K562 (cell line): ENCODE measurements at regions of chrX and their contacts with region 1.

Region 1: DNA sequence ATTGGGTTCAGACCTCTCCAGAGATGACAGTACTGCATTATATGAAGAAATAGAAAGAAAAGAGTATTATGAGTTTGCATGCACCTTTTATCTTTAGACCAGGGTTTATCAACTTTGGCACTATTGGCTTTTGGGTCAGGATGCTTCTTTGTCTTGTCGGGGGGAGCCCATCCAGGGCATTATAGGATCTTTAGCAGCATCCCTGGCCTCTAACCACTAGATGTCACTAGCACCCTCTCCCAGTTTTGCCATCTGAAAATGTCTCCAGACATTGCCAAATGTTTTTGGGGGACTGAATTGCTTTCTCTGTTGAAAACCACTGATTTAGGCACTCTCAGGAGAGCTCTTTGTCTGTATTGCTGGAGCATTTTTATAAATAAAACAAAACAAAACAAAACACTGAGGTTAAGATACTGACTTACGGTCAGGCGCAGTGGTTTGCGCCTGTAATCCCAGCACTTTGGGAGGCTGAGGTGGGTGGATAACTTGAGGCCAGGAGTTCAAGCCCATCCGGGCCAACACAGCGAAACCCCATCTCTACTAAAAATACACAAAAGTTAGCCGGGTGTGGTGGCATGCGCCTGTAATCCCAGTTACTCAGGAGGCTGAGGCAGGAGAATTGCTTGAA is 23.6 kb downstream of the CA5B start:
- DNase-seq: peak; percentile 39 to 53 (median 42)
- ATAC-seq: peak; percentile 88
- H3K4me3 ChIP-seq: no peak overlapping the region
- H3K27ac ChIP-seq: no peak overlapping the region
- H3K4me1 ChIP-seq: no peaks in the 10 kb centered on the region
- H3K27me3 ChIP-seq: no peaks in the 10 kb centered on the region
- CTCF ChIP-seq: peak; percentile 61 to 65 (median 64)
- EP300 ChIP-seq: no peak
- POLR2A ChIP-seq: no peak
- RAD21 ChIP-seq: peak; percentile 50 to 64

Region 2: DNA sequence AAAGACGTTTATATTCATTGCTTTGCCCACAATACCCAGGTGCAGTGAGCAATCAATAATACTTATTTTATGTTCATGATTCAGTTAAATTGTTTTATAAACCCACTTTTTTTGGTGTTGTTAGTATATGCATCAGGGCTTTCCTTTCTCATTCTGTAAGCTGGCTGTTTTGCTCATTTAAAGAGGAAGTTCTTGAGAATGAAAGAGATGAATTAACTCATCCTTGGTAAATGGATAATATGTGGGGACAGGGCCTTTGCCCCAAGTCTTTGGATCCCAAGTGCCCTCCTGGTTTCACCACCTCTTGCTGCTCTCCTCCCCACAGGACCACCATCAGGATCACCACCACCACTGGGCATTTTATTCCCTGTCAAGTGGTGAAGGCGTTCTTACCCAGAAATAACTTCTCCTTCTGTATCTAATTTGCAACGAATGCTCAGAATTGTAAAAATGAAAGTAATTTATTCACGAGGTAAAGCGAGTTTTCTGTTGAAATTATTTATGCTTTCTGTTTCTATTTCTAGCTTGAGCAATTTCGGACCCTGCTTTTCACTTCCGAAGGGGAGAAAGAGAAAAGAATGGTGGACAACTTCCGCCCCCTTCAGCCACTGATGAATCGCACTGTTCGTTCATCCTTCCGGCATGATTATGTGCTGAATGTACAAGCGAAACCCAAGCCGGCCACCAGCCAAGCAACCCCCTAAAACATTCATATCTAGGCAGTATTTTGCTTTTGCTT is 20.5 kb after region 1 on chrX:
- CTCF ChIA-PET with region 1: no interaction called
- POLR2A ChIA-PET with region 1: no interaction called
- in situ Hi-C with region 1: no loop called
- intact Hi-C with region 1: no loop called
- DNase-seq: no peak
- ATAC-seq: no peak
- H3K4me3 ChIP-seq: no peak overlapping the region
- H3K27ac ChIP-seq: no peak overlapping the region
- H3K4me1 ChIP-seq: no peaks in the 10 kb centered on the region
- H3K27me3 ChIP-seq: no peaks in the 10 kb centered on the region
- CTCF ChIP-seq: no peak
- EP300 ChIP-seq: no peak
- POLR2A ChIP-seq: no peak
- RAD21 ChIP-seq: no peak

Region 3: GRCh38 chrX:15873566-15873965 is 111.9 kb after region 1 on chrX:
- CTCF ChIA-PET with region 1: no interaction called
- POLR2A ChIA-PET with region 1: no interaction called
- in situ Hi-C with region 1: no loop called
- intact Hi-C with region 1: no loop called
- DNase-seq: no peak
- ATAC-seq: no peak
- H3K4me3 ChIP-seq: no peak overlapping the region
- H3K27ac ChIP-seq: no peak overlapping the region
- H3K4me1 ChIP-seq: no peaks in the 10 kb centered on the region
- H3K27me3 ChIP-seq: no peaks in the 10 kb centered on the region; a peak in 1 of 5 replicates
- CTCF ChIP-seq: no peak
- EP300 ChIP-seq: no peak
- POLR2A ChIP-seq: no peak
- RAD21 ChIP-seq: no peak

Region 4: DNA sequence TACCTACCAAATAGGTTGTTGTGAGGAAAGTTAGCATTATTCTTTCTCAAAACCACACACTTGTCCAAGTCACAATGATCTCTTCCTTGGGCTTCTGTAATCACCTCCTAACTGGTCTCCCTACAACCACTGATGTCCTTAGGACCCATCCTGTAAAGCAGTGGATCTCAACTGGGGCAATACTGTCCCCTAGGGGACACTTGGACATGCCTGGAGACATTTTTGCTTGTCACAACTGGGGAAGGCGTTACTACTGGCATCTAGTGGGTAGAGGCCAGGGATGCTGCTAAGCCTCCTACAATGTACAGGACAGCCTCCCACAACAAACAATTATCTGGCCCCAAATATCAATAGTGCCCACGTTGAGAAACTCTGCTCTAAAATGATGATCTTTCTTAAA is 211.6 kb after region 1 on chrX:
- CTCF ChIA-PET with region 1: no interaction called
- POLR2A ChIA-PET with region 1: no interaction called
- in situ Hi-C with region 1: no loop called
- intact Hi-C with region 1: loop called (anchors 2 kb)
- DNase-seq: peak; percentile 4 to 61 (median 28)
- ATAC-seq: peak; percentile 94
- H3K4me3 ChIP-seq: no peak overlapping the region
- H3K27ac ChIP-seq: no peak overlapping the region
- H3K4me1 ChIP-seq: peaks cover 0 to 19% of the 10 kb centered on the region in 2 experiments; a peak in 2 of 5 replicates
- H3K27me3 ChIP-seq: no peaks in the 10 kb centered on the region
- CTCF ChIP-seq: peak; percentile 69 to 94 (median 92)
- EP300 ChIP-seq: no peak
- POLR2A ChIP-seq: no peak
- RAD21 ChIP-seq: peak; percentile 93

Region 5: GRCh38 chrX:16002185-16002584 is 240.5 kb after region 1 on chrX:
- CTCF ChIA-PET with region 1: no interaction called
- POLR2A ChIA-PET with region 1: no interaction called
- in situ Hi-C with region 1: no loop called
- intact Hi-C with region 1: no loop called
- DNase-seq: no peak
- ATAC-seq: no peak
- H3K4me3 ChIP-seq: no peak overlapping the region
- H3K27ac ChIP-seq: no peak overlapping the region
- H3K4me1 ChIP-seq: no peaks in the 10 kb centered on the region
- H3K27me3 ChIP-seq: no peaks in the 10 kb centered on the region
- CTCF ChIP-seq: no peak
- EP300 ChIP-seq: no peak
- POLR2A ChIP-seq: no peak
- RAD21 ChIP-seq: no peak

Region 6: DNA sequence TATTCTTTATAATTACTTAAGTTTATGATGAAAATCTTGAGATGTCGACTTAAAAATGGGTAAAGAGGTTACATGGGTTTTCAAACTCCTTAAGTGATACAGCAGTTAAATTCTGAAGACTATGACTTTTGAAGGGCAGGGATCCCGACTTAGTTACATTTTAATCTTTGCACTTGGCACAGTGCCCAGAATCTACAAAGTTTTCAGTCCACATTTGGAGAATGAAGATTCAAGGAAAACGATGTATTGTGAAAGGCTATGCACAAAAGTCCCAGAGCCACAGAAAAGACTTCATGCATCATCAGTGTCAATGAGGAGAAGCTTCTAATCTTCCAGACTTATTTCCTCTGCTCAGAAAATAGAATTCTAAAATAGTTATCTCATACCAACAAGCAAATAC is 325.4 kb after region 1 on chrX:
- CTCF ChIA-PET with region 1: no interaction called
- POLR2A ChIA-PET with region 1: no interaction called
- in situ Hi-C with region 1: no loop called
- intact Hi-C with region 1: no loop called
- DNase-seq: no peak
- ATAC-seq: no peak
- H3K4me3 ChIP-seq: no peak overlapping the region
- H3K27ac ChIP-seq: no peak overlapping the region
- H3K4me1 ChIP-seq: no peaks in the 10 kb centered on the region
- H3K27me3 ChIP-seq: no peaks in the 10 kb centered on the region
- CTCF ChIP-seq: no peak
- EP300 ChIP-seq: no peak
- POLR2A ChIP-seq: no peak
- RAD21 ChIP-seq: no peak

Region 7: DNA sequence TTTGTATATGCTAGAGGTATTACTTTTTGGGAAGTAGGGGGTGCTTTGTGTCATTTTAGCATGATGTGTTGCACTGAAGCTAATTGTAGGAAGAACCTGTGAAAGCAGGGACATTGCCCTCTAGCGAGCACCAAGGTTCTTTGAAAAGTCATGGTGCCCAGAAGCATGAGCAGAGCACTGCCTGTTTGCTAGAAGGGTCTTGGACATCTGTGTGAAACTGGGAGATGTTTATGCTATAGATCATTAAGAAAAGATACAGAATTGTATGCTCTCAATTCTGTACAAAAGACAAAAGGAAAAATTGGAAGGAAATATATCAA is 376.4 kb after region 1 on chrX:
- CTCF ChIA-PET with region 1: no interaction called
- POLR2A ChIA-PET with region 1: no interaction called
- in situ Hi-C with region 1: no loop called
- intact Hi-C with region 1: loop called (anchors 5 kb)
- DNase-seq: peak in 2 of 4 experiments; percentile 8 to 20
- ATAC-seq: peak; percentile 58; the same call in 2 of the 3 replicates
- H3K4me3 ChIP-seq: no peak overlapping the region
- H3K27ac ChIP-seq: no peak overlapping the region
- H3K4me1 ChIP-seq: no peaks in the 10 kb centered on the region
- H3K27me3 ChIP-seq: no peaks in the 10 kb centered on the region
- CTCF ChIP-seq: peak; percentile 40 to 51 (median 40); a peak in 4 of 6 replicates
- EP300 ChIP-seq: no peak
- POLR2A ChIP-seq: no peak
- RAD21 ChIP-seq: peak; percentile 36 to 59; a peak in 3 of 4 replicates

Region 8: DNA sequence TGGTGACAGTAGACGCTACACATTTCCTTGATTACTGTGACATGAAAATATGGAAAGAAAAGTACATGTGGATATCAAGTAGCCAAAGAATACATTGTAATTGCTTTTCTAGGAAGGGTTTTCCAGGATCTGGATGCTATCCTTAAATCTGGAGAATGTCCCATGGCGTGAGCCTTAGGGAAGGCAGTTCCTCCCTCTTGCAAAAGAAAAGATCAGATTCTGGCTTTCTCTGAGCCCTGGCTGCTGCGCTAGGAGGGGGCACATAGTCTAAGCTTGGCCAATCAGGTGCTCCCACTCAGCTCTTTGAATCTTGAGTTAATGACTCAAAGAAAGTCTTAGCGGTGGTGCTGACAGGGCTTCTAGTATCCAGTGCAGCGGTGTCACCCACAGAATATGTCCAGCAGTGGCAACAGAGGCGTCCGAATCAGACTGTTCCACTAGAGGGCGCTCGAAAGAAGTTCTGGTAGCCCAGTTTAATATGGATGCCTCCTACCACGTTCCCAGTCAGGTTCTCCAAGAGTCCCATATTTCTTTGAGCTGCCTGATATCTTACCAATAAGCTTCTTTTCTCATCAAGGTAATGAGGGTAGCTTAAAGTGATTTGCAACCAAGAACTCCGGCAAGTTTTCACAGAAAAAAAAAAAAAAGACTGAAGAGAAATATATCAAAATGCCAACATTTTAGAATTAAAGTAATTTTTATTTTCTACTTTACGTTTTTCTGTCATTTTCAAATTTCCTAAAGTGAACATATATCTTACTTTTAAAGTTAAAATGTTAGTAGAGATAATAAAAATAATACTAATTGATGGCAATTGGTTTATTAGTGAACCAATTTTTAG is 674.9 kb after region 1 on chrX:
- CTCF ChIA-PET with region 1: no interaction called
- POLR2A ChIA-PET with region 1: no interaction called
- in situ Hi-C with region 1: loop called (anchors 25 kb)
- intact Hi-C with region 1: no loop called
- DNase-seq: peak; percentile 48 to 79 (median 62)
- ATAC-seq: peak; percentile 100
- H3K4me3 ChIP-seq: no peak overlapping the region
- H3K27ac ChIP-seq: no peak overlapping the region
- H3K4me1 ChIP-seq: no peaks in the 10 kb centered on the region
- H3K27me3 ChIP-seq: no peaks in the 10 kb centered on the region
- CTCF ChIP-seq: peak; percentile 69 to 81 (median 74)
- EP300 ChIP-seq: no peak
- POLR2A ChIP-seq: no peak
- RAD21 ChIP-seq: peak; percentile 38 to 63; a peak in 3 of 4 replicates

Region 9: GRCh38 chrX:16445166-16445752 is 683.6 kb after region 1 on chrX:
- CTCF ChIA-PET with region 1: no interaction called
- POLR2A ChIA-PET with region 1: no interaction called
- in situ Hi-C with region 1: loop called (anchors 25 kb)
- intact Hi-C with region 1: loop called (anchors 5 kb)
- DNase-seq: peak; percentile 24 to 45 (median 26)
- ATAC-seq: peak; percentile 91
- H3K4me3 ChIP-seq: no peak overlapping the region
- H3K27ac ChIP-seq: no peak overlapping the region
- H3K4me1 ChIP-seq: no peaks in the 10 kb centered on the region
- H3K27me3 ChIP-seq: peaks cover 0 to 4% of the 10 kb centered on the region in 2 experiments; a peak in 1 of 5 replicates
- CTCF ChIP-seq: peak; percentile 61 to 71 (median 67)
- EP300 ChIP-seq: no peak
- POLR2A ChIP-seq: no peak
- RAD21 ChIP-seq: peak; percentile 42 to 61; a peak in 3 of 4 replicates